ENCODE measurements at regions of chr10 and their contacts with region 1.

Region 1: GRCh38 chr10:118568327-118568848 is 27.1 kb downstream of the PRLHR start:
- DNase-seq: peak in 1 of 2 donors; percentile 87
- ATAC-seq: peak; percentile 64 to 77 (median 68)
- H3K4me3 ChIP-seq: no peak overlapping the region
- H3K4me3 Mint-ChIP-seq: no peak overlapping the region
- H3K27ac ChIP-seq: no peak overlapping the region
- H3K27ac Mint-ChIP-seq: no peak overlapping the region
- H3K4me1 ChIP-seq: no peaks in the 10 kb centered on the region
- H3K4me1 Mint-ChIP-seq: no peaks in the 10 kb centered on the region
- H3K27me3 ChIP-seq: no peaks in the 10 kb centered on the region
- H3K27me3 Mint-ChIP-seq: peaks cover 0 to 8% of the 10 kb centered on the region in 2 donors
- CTCF ChIP-seq: peak; percentile 71

Region 2: GRCh38 chr10:118720685-118721538 is 152.5 kb after region 1 on chr10:
- intact Hi-C with region 1: loop called (anchors 1 kb)
- DNase-seq: peak; percentile 29 to 82
- ATAC-seq: peak; percentile 65 to 73 (median 68)
- H3K4me3 ChIP-seq: no peak overlapping the region
- H3K4me3 Mint-ChIP-seq: no peak overlapping the region
- H3K27ac ChIP-seq: no peak overlapping the region
- H3K27ac Mint-ChIP-seq: peak overlapping the region in 1 of 2 donors; percentile 31
- H3K4me1 ChIP-seq: no peaks in the 10 kb centered on the region
- H3K4me1 Mint-ChIP-seq: peaks cover 2 to 5% of the 10 kb centered on the region in 2 donors
- H3K27me3 ChIP-seq: no peaks in the 10 kb centered on the region
- H3K27me3 Mint-ChIP-seq: no peaks in the 10 kb centered on the region
- CTCF ChIP-seq: peak; percentile 95

Region 3: GRCh38 chr10:118800920-118801319 is 232.5 kb after region 1 on chr10:
- intact Hi-C with region 1: loop called (anchors 5 kb)
- DNase-seq: peak in 1 of 2 donors; percentile 26
- ATAC-seq: no peak
- H3K4me3 ChIP-seq: no peak overlapping the region
- H3K4me3 Mint-ChIP-seq: no peak overlapping the region
- H3K27ac ChIP-seq: no peak overlapping the region
- H3K27ac Mint-ChIP-seq: no peak overlapping the region
- H3K4me1 ChIP-seq: no peaks in the 10 kb centered on the region
- H3K4me1 Mint-ChIP-seq: no peaks in the 10 kb centered on the region
- H3K27me3 ChIP-seq: no peaks in the 10 kb centered on the region
- H3K27me3 Mint-ChIP-seq: peaks cover 20 to 28% of the 10 kb centered on the region in 2 donors
- CTCF ChIP-seq: no peak

Region 4: DNA sequence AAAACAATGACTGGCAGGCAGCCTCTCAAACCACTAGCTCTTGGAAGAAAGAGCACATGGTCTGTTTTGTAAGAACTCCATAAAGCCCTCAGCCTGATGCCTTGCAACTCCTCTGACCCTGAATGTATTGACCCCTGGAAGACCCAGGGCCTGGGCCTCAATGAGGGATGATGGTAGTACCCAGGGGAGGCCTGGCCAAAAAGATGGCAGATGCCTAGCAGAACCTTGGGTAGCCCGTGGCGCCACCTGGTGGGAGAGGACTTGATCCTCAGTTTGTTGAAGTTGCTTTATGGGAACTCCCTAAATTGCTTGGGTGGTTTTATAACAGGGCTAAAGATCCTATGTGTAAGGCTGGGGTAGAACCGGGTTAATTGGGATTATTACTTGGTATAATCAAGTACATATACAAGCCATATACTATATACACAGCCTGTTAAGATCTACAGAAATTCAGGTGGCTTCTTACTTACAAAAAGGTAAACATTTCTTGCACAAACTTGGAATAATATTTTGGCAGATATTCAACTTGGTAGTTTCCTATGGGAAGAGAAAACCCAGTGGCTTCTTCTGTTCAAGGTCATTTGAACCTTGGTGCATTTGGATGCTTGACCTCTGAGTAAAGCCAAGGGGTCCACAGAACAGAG is 282.2 kb after region 1 on chr10:
- intact Hi-C with region 1: loop called (anchors 1 kb)
- DNase-seq: peak; percentile 44 to 67
- ATAC-seq: peak; percentile 31 to 68 (median 56)
- H3K4me3 ChIP-seq: no peak overlapping the region
- H3K4me3 Mint-ChIP-seq: no peak overlapping the region
- H3K27ac ChIP-seq: no peak overlapping the region
- H3K27ac Mint-ChIP-seq: no peak overlapping the region
- H3K4me1 ChIP-seq: no peaks in the 10 kb centered on the region
- H3K4me1 Mint-ChIP-seq: no peaks in the 10 kb centered on the region
- H3K27me3 ChIP-seq: no peaks in the 10 kb centered on the region
- H3K27me3 Mint-ChIP-seq: peaks cover 10 to 17% of the 10 kb centered on the region in 2 donors
- CTCF ChIP-seq: peak; percentile 53

Region 5: GRCh38 chr10:119028900-119029612 is 460.7 kb after region 1 on chr10:
- intact Hi-C with region 1: loop called (anchors 2 kb)
- DNase-seq: peak; percentile 69 to 87
- ATAC-seq: peak; percentile 84 to 87 (median 87)
- H3K4me3 ChIP-seq: peak overlapping the region; percentile 39
- H3K4me3 Mint-ChIP-seq: peak overlapping the region; percentile 90
- H3K27ac ChIP-seq: no peak overlapping the region
- H3K27ac Mint-ChIP-seq: no peak overlapping the region
- H3K4me1 ChIP-seq: peaks cover 10% of the 10 kb centered on the region
- H3K4me1 Mint-ChIP-seq: peaks cover 0 to 18% of the 10 kb centered on the region in 2 donors
- H3K27me3 ChIP-seq: no peaks in the 10 kb centered on the region
- H3K27me3 Mint-ChIP-seq: no peaks in the 10 kb centered on the region
- CTCF ChIP-seq: peak; percentile 9